Activated CD4-positive, alpha-beta T cell treated with anti-CD3 and anti-CD28 coated beads, Interleukin-2, amount 10 ng/mL, durations not matched to agents 24 days and 14 days (primary cell): ENCODE measurements at regions of chr2 and their contacts with region 1.

Region 1: GRCh38 chr2:169072163-169072925 is 3.0 kb downstream of the DHRS9 start:
- DNase-seq: no peak
- H3K4me3 Mint-ChIP-seq: peak overlapping the region; percentile 25
- H3K27ac Mint-ChIP-seq: peak overlapping the region; percentile 31
- H3K4me1 Mint-ChIP-seq: peaks cover 31% of the 10 kb centered on the region
- H3K27me3 Mint-ChIP-seq: no peaks in the 10 kb centered on the region

Region 2: DNA sequence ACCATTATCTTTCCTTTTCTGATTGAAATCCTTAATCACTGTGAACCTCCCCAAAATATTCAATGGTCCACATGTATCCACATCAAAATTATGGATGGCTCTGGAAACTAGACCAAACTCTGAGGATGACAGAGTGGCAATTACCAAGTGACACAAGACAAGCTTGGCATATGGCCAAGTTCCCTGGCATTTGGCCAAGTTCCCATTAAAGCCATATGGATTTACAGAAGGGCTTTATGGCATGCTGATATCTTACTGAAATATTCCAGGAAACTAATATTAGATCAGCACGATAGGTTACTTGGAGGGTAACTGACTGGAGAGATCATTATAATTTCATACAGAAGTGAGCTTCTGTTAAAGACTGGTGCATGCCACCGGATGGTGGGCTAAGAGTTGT is 638.2 kb before region 1 on chr2:
- intact Hi-C with region 1: loop called (anchors 2 kb)
- DNase-seq: no peak
- H3K4me3 Mint-ChIP-seq: no peak overlapping the region
- H3K27ac Mint-ChIP-seq: no peak overlapping the region
- H3K4me1 Mint-ChIP-seq: peaks cover 33% of the 10 kb centered on the region
- H3K27me3 Mint-ChIP-seq: no peaks in the 10 kb centered on the region

Region 3: GRCh38 chr2:169012812-169013627 is 59.3 kb before region 1 on chr2:
- intact Hi-C with region 1: loop called (anchors 2 kb)
- DNase-seq: no peak
- H3K4me3 Mint-ChIP-seq: no peak overlapping the region
- H3K27ac Mint-ChIP-seq: peak overlapping the region; percentile 56
- H3K4me1 Mint-ChIP-seq: peaks cover 5% of the 10 kb centered on the region
- H3K27me3 Mint-ChIP-seq: no peaks in the 10 kb centered on the region

Region 4: DNA sequence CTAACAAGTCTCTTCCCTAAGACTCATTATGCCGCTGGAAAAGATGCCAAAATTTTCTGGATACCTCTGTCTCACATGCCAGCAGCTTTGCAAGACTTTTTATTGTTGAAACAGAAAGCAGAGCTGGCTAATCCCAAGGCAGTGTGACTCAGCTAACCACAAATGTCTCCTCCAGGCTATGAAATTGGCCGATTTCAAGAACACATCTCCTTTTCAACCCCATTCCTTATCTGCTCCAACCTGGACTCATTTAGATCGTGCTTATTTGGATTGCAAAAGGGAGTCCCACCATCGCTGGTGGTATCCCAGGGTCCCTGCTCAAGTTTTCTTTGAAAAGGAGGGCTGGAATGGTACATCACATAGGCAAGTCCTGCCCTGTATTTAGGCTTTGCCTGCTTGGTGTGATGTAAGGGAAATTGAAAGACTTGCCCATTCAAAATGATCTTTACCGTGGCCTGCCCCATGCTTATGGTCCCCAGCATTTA is 23.3 kb after region 1 on chr2:
- intact Hi-C with region 1: loop called (anchors 1 kb)
- DNase-seq: peak; percentile 73
- H3K4me3 Mint-ChIP-seq: peak overlapping the region; percentile 60
- H3K27ac Mint-ChIP-seq: peak overlapping the region; percentile 51
- H3K4me1 Mint-ChIP-seq: peaks cover 25% of the 10 kb centered on the region
- H3K27me3 Mint-ChIP-seq: no peaks in the 10 kb centered on the region